Left cardiac atrium (tissue), 4 donors: ENCODE measurements at regions of chr2 and their contacts with region 1.

Region 1: DNA sequence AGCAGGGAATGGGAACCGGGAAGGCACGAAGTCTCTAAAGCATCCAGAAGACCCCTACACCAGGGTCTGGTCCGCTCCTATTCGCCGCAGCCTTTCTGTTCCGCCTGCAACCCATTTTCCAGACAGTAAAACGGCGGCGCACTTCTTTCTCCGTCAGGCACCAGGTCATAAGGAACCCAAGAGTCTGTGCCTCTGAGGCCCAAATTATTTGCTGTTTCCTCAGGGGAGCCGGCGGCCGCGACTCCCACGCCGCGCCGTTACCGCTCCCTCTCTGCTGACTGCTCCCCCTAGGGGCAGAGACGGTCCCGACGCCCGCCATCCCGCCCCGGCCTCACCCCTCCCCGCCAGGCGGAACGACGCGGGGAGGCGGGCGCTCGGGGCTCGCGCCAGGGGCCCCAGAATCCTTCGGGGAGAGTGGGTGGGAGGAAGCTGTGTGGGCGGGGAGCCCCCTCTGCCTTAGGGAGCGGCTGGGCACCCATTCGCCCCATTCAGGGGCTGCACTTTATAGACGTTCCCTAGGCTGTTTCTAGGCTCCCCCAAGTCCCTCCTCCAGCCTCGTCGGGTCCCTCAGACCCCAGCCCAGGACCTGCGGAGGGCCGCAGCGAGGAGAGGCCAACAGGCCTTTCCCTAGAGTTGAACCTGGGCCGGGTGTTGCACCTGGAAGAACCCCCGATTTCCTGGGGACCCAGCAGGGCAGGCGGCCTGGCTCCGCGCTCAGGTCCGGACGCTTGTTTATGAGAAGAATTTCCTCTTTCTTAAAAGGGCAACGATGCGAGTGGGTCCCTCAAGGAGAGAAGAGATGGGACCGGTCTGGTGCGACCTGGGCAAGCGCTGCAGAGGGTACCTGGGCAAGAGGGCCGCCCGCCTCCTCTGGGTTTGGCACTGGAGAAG is 3.6 kb upstream of the CTDSP1 start:
- DNase-seq: peak; percentile 94
- ATAC-seq: peak; percentile 66 to 71

Region 2: GRCh38 chr2:218292048-218293014 is 103.7 kb before region 1 on chr2 and contains the start of gene TMBIM1:
- intact Hi-C with region 1: loop called (anchors 2 to 10 kb)
- DNase-seq: peak; percentile 87
- ATAC-seq: peak; percentile 92 to 93
- total RNA-seq, gene TMBIM1: 156 to 166 TPM

Region 3: DNA sequence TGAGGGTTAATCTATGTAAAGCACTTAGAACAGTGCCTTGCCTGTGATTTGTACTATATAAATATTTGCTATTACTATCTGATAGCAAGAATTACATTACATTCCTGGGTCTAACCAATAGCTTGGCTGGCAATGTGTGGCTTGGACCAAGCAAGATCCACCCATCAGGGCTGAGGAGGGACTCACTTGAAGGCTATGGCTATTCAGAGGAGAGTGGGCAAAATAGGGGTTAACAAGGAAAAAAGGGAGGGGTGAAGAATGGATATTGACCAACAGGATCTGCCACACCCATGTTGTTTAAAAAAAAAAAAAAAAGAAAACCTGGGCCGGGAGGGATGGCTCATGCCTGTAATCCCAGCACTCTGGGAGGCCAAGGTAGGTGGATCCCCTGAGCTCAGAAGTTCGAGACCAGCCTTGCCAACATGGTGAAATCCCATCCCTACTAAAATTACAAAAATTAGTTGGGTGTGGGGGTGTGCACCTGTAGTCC is 83.7 kb before region 1 on chr2:
- intact Hi-C with region 1: no loop called
- DNase-seq: no peak
- ATAC-seq: no peak